ENCODE measurements at regions of chr1 and their contacts with region 1.

Region 1: GRCh38 chr1:61049850-61050540 is 32.4 kb upstream of the NFIA start:
- DNase-seq: peak; percentile 91 to 97
- H3K4me3 ChIP-seq: peak overlapping the region; percentile 75 to 96 (median 90)
- H3K27ac ChIP-seq: peak overlapping the region; percentile 97 to 99
- H3K4me1 ChIP-seq: peaks cover 0 to 8% of the 10 kb centered on the region in 2 donors
- H3K27me3 ChIP-seq: no peaks in the 10 kb centered on the region
- CTCF ChIP-seq: peak; percentile 97
- POLR2A ChIP-seq: no peak

Region 2: DNA sequence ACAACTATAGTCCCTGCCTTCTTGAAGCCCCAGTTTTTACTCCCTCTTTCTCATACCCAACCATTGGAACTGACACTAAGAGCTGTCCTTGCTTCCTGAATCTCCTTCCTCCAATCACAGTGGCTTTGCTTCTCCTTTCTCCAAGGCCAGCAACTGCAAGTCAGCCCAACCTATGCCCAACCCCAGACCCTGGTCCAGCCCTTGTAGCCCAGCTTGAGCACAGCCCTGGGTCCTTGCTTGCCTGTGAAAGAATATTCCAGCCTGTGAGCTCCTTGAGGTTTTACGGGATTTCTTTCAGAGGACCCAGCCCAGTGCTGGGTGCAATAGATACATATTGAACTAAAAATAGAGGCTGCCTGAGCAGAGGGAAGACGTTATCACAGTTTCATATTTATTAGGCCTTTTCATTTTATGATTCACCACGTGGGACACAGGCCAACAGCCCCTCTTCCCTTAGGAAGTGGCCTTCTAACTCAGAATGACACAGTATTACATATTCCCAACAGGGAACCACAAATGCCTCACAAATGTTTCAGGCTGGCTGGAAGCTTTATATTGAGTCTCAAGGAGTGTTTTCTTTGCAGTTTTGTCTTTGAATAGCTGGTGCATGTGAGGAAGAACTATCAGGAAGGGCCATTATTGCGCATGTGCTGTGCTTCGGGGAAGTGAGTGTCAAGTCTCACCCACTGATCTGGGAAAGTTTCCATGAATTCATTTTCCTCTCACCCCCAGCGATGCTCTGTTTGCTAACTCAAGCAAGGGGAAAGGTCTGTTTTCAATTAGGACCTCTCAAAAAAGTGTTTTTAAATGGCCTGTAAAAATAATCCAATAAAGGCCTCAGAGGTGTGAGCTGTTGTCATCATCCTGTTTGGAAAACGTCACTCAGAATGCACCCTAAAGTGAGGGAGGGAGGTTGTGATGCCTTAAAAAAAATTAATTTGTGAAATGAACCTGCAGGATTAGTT is 60.0 kb before region 1 on chr1:
- intact Hi-C with region 1: loop called (anchors 10 kb)
- DNase-seq: no peak
- H3K4me3 ChIP-seq: peak overlapping the region in 1 of 3 donors; percentile 27
- H3K27ac ChIP-seq: peak overlapping the region; percentile 67 to 90
- H3K4me1 ChIP-seq: no peaks in the 10 kb centered on the region
- H3K27me3 ChIP-seq: no peaks in the 10 kb centered on the region
- CTCF ChIP-seq: no peak
- POLR2A ChIP-seq: no peak

Region 3: GRCh38 chr1:61067404-61068019 is 17.5 kb after region 1 on chr1:
- intact Hi-C with region 1: no loop called
- DNase-seq: no peak
- H3K4me3 ChIP-seq: no peak overlapping the region
- H3K27ac ChIP-seq: no peak overlapping the region
- H3K4me1 ChIP-seq: no peaks in the 10 kb centered on the region
- H3K27me3 ChIP-seq: no peaks in the 10 kb centered on the region
- CTCF ChIP-seq: no peak
- POLR2A ChIP-seq: no peak

Region 4: GRCh38 chr1:61337981-61338848 is 288.2 kb after region 1 on chr1:
- intact Hi-C with region 1: loop called (anchors 5 kb)
- DNase-seq: peak; percentile 74 to 80
- H3K4me3 ChIP-seq: peak overlapping the region; percentile 2 to 35 (median 20)
- H3K27ac ChIP-seq: peak overlapping the region; percentile 79 to 81
- H3K4me1 ChIP-seq: no peaks in the 10 kb centered on the region
- H3K27me3 ChIP-seq: no peaks in the 10 kb centered on the region
- CTCF ChIP-seq: peak; percentile 64 to 89 (median 76)
- POLR2A ChIP-seq: no peak

Region 5: DNA sequence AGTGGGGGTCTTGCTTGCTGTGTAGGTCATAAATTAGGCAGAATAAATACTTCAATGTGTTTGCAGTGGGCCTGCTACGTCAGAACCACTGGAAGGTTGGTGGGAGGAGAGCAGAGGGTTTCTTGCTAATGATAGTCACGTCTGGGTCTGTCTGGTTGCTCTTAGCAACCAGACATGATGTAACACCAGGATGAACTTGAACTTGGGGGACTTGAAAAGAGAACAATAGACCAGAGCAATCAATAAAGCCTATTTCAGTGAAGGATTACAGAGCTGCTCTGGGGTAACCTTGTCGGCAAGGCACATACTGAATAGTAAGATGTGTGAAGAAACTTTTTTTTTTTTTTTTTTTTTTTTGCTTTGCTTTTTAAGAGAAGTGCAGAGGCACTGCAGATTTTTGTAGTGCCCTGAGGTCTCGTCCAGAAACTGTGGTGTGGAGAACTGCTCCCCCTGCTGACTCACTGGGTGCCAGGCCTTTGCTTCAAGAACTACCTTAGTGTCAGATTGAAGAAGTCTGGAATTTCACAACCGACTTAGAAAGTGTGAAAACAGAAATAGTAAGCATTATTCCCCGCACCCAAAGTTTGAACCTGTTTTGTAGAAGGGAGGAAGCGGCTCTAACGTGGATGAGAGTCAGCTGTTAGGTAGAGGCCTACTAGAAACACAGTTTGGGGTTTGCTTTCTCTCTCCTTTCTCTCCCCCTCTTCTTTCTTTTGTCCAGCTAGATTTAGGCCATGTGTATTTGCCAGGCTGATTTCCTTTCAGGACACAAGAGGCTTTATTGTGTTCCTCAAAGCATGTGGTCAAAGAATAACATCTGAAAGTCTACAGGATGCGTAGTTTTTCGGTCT is 403.3 kb after region 1 on chr1:
- intact Hi-C with region 1: loop called (anchors 10 kb)
- DNase-seq: peak; percentile 85 to 93
- H3K4me3 ChIP-seq: no peak overlapping the region
- H3K27ac ChIP-seq: peak overlapping the region; percentile 69 to 75
- H3K4me1 ChIP-seq: peaks cover 0 to 23% of the 10 kb centered on the region in 2 donors
- H3K27me3 ChIP-seq: no peaks in the 10 kb centered on the region
- CTCF ChIP-seq: peak; percentile 28 to 78 (median 77)
- POLR2A ChIP-seq: no peak